Heart left ventricle (tissue), 16 donors: ENCODE measurements at regions of chr4 and their contacts with region 1.

Region 1: DNA sequence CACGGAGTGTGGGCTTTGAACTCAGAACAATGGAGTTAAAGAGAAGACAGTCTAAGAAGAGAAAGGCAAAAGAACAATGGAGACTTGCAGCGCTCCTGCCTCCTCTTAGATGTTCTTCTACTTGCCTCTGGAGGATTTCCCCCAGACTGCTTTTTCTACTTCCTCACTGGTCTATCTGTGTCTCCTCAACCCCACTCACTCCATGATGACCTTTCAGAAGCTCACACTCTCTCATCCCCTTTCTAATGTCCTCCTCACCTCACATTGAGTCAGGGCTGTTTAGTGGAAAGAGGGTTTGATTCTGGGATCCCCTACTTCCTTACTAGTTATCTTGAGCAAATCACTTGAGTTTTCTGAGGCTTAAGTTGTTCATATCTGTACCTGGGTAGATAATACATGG is 12.2 kb upstream of the HERC6 start:
- DNase-seq: no peak
- ATAC-seq: no peak
- H3K4me3 ChIP-seq: no peak overlapping the region
- H3K27ac ChIP-seq: no peak overlapping the region
- H3K4me1 ChIP-seq: peaks cover 0 to 5% (median 0%) of the 10 kb centered on the region in 12 donors
- H3K27me3 ChIP-seq: no peaks in the 10 kb centered on the region
- CTCF ChIP-seq: no peak
- POLR2A ChIP-seq: no peak

Region 2: DNA sequence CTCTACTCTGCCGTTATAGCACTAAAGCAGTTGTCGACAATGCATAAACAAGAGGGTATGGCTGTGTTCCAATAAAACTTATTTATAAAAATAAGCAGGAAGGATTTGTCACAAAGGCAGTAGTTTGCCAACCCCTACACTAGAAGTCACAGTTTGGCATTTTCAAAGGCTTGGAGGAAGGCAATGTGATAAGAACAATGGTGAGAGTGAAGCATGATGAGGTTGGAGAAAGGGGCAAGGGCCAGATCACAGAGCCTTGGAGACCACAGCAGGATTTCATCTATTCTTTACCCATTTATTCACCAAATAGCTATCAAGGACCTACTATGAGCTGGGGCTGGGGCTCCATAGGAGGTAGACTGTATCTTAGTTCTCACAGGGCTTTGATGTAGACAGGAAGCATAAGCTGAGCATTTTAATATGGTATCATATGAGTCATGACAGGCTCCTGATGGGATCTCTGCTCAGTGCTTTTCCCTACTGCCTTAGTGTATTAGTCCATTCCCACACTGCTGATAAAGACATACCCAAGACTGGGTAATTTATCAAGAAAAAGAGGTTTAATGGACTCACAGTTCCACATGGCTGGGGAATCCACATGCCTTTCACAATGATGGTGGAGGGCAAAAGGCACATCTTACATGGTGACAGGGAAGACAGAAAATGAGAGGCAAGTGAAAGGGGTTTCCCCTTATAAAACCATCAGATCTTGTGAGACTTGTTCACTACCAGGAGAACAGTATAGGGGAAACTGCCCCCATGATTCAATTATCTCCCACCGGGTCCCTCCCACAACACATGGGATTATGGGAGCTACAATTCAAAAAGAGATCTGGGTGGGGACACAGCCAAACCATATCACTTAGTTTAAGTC is 141.0 kb before region 1 on chr4:
- intact Hi-C with region 1: loop called in 7 of 10 experiments (anchors 5 to 10 kb)
- DNase-seq: no peak
- ATAC-seq: peak in 3 of 4 donors; percentile 37 to 51 (median 50)
- H3K4me3 ChIP-seq: no peak overlapping the region
- H3K27ac ChIP-seq: peak overlapping the region in 2 of 12 donors; percentile 26 to 35
- H3K4me1 ChIP-seq: peaks cover 0 to 20% (median 5%) of the 10 kb centered on the region in 12 donors
- H3K27me3 ChIP-seq: no peaks in the 10 kb centered on the region
- CTCF ChIP-seq: no peak
- POLR2A ChIP-seq: no peak

Region 3: DNA sequence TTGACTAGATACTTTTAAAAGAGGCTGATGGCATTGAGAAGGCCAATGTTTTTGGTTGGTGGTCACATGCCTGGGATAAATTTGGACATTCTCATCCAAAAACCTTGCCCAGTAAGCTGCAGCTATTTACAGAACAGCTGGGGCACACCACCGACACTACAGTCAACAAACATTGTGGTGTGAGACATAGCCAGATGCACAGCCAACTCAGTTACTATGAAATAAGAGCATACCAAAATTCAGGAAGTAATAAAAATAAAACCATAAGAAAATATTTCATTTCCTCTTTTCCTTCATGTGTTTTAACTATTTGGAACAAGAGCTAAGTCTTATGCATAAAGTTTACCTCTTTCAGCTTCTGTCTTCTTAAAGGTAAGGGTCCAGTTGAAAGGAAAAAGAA is 90.9 kb before region 1 on chr4:
- intact Hi-C with region 1: loop called in 2 of 10 experiments (anchors 5 kb)
- DNase-seq: no peak
- ATAC-seq: peak in 2 of 4 donors; percentile 20 to 26
- H3K4me3 ChIP-seq: no peak overlapping the region
- H3K27ac ChIP-seq: peak overlapping the region in 3 of 12 donors; percentile 1 to 30 (median 8)
- H3K4me1 ChIP-seq: peaks cover 0 to 56% (median 23%) of the 10 kb centered on the region in 12 donors
- H3K27me3 ChIP-seq: no peaks in the 10 kb centered on the region
- CTCF ChIP-seq: no peak
- POLR2A ChIP-seq: no peak

Region 4: GRCh38 chr4:88291003-88291402 is 75.5 kb before region 1 on chr4:
- intact Hi-C with region 1: no loop called
- DNase-seq: peak in 2 of 5 donors; percentile 35 to 48
- ATAC-seq: peak; percentile 83 to 88 (median 86)
- H3K4me3 ChIP-seq: no peak overlapping the region
- H3K27ac ChIP-seq: peak overlapping the region; percentile 56 to 97 (median 82)
- H3K4me1 ChIP-seq: peaks cover 0 to 55% (median 7%) of the 10 kb centered on the region in 12 donors
- H3K27me3 ChIP-seq: no peaks in the 10 kb centered on the region
- CTCF ChIP-seq: no peak
- POLR2A ChIP-seq: peak in 1 of 2 donors; percentile 39

Region 5: GRCh38 chr4:88706574-88706973 is 340.1 kb after region 1 on chr4:
- intact Hi-C with region 1: no loop called
- DNase-seq: peak in 3 of 5 donors; percentile 19 to 61 (median 28)
- ATAC-seq: peak; percentile 77 to 93 (median 88)
- H3K4me3 ChIP-seq: no peak overlapping the region
- H3K27ac ChIP-seq: peak overlapping the region in 6 of 12 donors; percentile 8 to 61 (median 38)
- H3K4me1 ChIP-seq: peaks cover 0 to 13% (median 2%) of the 10 kb centered on the region in 12 donors
- H3K27me3 ChIP-seq: no peaks in the 10 kb centered on the region
- CTCF ChIP-seq: peak; percentile 35 to 72 (median 56)
- POLR2A ChIP-seq: no peak

Region 6: DNA sequence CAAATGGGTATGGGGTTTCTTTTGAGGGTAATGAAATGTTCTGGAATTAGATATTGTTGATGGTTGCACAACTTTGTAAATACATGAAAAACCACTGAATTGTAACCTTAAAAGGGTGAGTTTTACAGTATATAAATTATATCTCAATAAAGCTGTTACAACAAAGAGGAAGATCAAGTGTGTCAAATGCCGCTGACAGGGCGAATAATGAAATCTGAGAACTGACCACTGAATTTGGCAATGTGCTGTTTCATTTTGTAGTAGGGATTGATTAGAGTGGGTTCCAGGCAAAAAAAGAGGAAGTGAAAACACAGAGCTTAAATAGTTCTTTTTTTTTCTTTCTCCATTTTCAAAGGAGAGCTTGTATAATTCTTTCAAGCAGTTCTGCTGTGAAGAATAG is 492.3 kb after region 1 on chr4:
- intact Hi-C with region 1: no loop called
- DNase-seq: no peak
- ATAC-seq: peak; percentile 31 to 68 (median 40)
- H3K4me3 ChIP-seq: no peak overlapping the region
- H3K27ac ChIP-seq: peak overlapping the region in 1 of 12 donors; percentile 86
- H3K4me1 ChIP-seq: peaks cover 0 to 31% (median 0%) of the 10 kb centered on the region in 12 donors
- H3K27me3 ChIP-seq: no peaks in the 10 kb centered on the region
- CTCF ChIP-seq: no peak
- POLR2A ChIP-seq: no peak

Region 7: GRCh38 chr4:90002441-90003077 is 1636.1 kb after region 1 on chr4:
- intact Hi-C with region 1: no loop called
- DNase-seq: no peak
- ATAC-seq: no peak
- H3K4me3 ChIP-seq: no peak overlapping the region
- H3K27ac ChIP-seq: no peak overlapping the region
- H3K4me1 ChIP-seq: no peaks in the 10 kb centered on the region
- H3K27me3 ChIP-seq: no peaks in the 10 kb centered on the region
- CTCF ChIP-seq: no peak
- POLR2A ChIP-seq: no peak